Activated CD8-positive, alpha-beta T cell treated with anti-CD3 and anti-CD28 coated beads for 36 hours (primary cell): ENCODE measurements at regions of chr12 and their contacts with region 1.

Region 1: GRCh38 chr12:126069549-126070165 is 1004.4 kb downstream of the AACS start:
- DNase-seq: peak; percentile 75
- ATAC-seq: no peak
- H3K4me3 Mint-ChIP-seq: no peak overlapping the region
- H3K27ac Mint-ChIP-seq: no peak overlapping the region
- H3K4me1 Mint-ChIP-seq: no peaks in the 10 kb centered on the region
- H3K27me3 Mint-ChIP-seq: no peaks in the 10 kb centered on the region
- CTCF ChIP-seq: peak; percentile 56

Region 2: GRCh38 chr12:126747530-126748149 is 678.0 kb after region 1 on chr12:
- CTCF ChIA-PET with region 1: interaction called, 4 read pairs
- POLR2A ChIA-PET with region 1: no interaction called
- intact Hi-C with region 1: loop called (anchors 10 kb)
- DNase-seq: peak; percentile 63
- ATAC-seq: peak; percentile 49
- H3K4me3 Mint-ChIP-seq: no peak overlapping the region
- H3K27ac Mint-ChIP-seq: no peak overlapping the region
- H3K4me1 Mint-ChIP-seq: no peaks in the 10 kb centered on the region
- H3K27me3 Mint-ChIP-seq: no peaks in the 10 kb centered on the region
- CTCF ChIP-seq: peak; percentile 95

Region 3: DNA sequence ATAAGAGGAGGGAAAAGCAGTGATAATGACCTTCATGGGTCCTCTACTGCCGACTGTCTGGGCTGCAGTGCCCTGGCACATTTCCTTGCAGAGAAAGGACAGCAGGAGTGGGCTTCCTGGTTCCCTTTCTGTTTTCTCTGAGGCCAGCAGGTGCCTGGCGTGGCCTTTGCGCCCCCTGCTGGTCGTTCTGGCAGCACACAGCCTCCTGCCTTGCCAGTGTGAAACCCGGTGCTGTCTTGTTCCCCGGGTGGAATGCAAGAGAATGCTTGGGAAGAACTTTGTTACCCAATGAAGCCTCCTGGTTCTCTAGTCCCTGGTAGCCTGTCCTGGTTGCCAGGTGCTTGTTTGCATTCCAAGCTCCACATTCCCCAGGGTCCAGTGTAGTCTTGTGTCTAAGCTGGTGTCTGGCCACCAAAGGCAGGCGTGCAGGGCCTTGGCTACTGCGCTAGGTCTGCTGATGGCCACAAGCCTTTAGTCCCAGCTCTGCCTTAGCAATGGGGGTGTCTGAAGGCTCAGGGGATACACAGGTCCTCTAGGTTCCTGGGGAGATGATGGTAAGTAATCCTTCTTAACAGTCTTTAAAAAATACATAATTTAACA is 804.9 kb after region 1 on chr12:
- CTCF ChIA-PET with region 1: interaction called, 7 read pairs
- POLR2A ChIA-PET with region 1: no interaction called
- intact Hi-C with region 1: loop called (anchors 5 kb)
- DNase-seq: peak; percentile 67
- ATAC-seq: peak; percentile 66
- H3K4me3 Mint-ChIP-seq: no peak overlapping the region
- H3K27ac Mint-ChIP-seq: no peak overlapping the region
- H3K4me1 Mint-ChIP-seq: no peaks in the 10 kb centered on the region
- H3K27me3 Mint-ChIP-seq: peaks cover 4% of the 10 kb centered on the region
- CTCF ChIP-seq: peak; percentile 88